Transverse colon (tissue), 4 donors: ENCODE measurements at regions of chr11 and their contacts with region 1.

Region 1: DNA sequence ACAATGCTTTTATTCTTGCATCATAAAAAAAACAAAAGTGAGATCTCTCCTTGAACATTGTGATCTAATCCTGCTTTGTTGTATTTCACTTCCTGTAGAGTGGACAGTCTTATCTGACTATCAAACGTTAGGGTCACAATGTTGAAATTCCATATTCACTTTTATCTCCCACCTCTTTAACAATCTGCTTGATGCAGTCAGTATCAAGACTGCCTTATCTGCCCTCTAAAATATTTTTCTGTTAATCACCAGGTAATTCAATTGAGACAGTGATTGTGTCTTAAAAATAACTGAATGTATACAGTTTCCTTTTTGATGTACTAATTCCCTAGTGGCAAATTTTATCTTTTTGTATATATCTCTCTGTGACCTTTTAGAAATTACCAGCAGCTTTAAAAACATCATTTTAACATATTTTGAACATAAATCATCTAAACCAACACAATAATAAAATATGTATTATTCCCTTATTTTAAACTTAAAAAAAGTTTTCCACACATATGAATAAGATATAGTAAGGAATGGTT is 143.1 kb upstream of the MPPED2 start:
- DNase-seq: no peak
- H3K4me3 ChIP-seq: no peak overlapping the region
- H3K27ac ChIP-seq: no peak overlapping the region
- H3K4me1 ChIP-seq: no peaks in the 10 kb centered on the region
- H3K27me3 ChIP-seq: no peaks in the 10 kb centered on the region
- CTCF ChIP-seq: no peak
- EP300 ChIP-seq: no peak
- POLR2A ChIP-seq: no peak

Region 2: GRCh38 chr11:30545507-30545906 is 183.7 kb before region 1 on chr11:
- in situ Hi-C with region 1: no loop called
- intact Hi-C with region 1: no loop called
- DNase-seq: peak; percentile 20
- H3K4me3 ChIP-seq: no peak overlapping the region
- H3K27ac ChIP-seq: no peak overlapping the region
- H3K4me1 ChIP-seq: no peaks in the 10 kb centered on the region
- H3K27me3 ChIP-seq: no peaks in the 10 kb centered on the region
- CTCF ChIP-seq: no peak
- EP300 ChIP-seq: no peak
- POLR2A ChIP-seq: no peak

Region 3: DNA sequence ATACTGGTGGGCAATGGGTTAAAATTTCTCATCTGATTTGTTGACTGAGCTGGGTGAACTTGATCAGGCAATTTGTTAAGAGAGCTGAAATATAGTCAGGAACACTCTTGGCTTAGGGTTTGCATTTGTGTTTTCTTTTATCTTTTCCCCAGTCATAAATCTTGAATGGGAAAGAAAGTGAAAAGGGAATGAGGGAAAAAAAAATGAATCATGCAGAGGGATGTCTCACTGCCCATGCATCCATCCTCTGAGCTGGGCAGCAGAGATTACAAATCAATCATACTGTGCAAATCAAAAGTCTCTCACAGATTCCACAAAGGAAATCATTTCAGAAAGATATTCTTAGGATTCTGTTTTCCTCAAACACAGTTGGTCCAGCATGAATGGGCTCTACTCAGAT is 31.1 kb after region 1 on chr11:
- in situ Hi-C with region 1: no loop called
- intact Hi-C with region 1: no loop called
- DNase-seq: no peak
- H3K4me3 ChIP-seq: no peak overlapping the region
- H3K27ac ChIP-seq: no peak overlapping the region
- H3K4me1 ChIP-seq: peaks cover 0 to 15% (median 0%) of the 10 kb centered on the region in 4 donors
- H3K27me3 ChIP-seq: no peaks in the 10 kb centered on the region
- CTCF ChIP-seq: no peak
- EP300 ChIP-seq: no peak
- POLR2A ChIP-seq: no peak

Region 4: GRCh38 chr11:32105871-32106560 is 1376.8 kb after region 1 on chr11:
- in situ Hi-C with region 1: no loop called
- intact Hi-C with region 1: loop called (anchors 5 kb)
- DNase-seq: no peak
- H3K4me3 ChIP-seq: no peak overlapping the region
- H3K27ac ChIP-seq: no peak overlapping the region
- H3K4me1 ChIP-seq: no peaks in the 10 kb centered on the region
- H3K27me3 ChIP-seq: no peaks in the 10 kb centered on the region
- CTCF ChIP-seq: no peak
- EP300 ChIP-seq: no peak
- POLR2A ChIP-seq: no peak